Sigmoid colon (tissue), 7 donors: ENCODE measurements at regions of chr21 and their contacts with region 1.

Region 1: DNA sequence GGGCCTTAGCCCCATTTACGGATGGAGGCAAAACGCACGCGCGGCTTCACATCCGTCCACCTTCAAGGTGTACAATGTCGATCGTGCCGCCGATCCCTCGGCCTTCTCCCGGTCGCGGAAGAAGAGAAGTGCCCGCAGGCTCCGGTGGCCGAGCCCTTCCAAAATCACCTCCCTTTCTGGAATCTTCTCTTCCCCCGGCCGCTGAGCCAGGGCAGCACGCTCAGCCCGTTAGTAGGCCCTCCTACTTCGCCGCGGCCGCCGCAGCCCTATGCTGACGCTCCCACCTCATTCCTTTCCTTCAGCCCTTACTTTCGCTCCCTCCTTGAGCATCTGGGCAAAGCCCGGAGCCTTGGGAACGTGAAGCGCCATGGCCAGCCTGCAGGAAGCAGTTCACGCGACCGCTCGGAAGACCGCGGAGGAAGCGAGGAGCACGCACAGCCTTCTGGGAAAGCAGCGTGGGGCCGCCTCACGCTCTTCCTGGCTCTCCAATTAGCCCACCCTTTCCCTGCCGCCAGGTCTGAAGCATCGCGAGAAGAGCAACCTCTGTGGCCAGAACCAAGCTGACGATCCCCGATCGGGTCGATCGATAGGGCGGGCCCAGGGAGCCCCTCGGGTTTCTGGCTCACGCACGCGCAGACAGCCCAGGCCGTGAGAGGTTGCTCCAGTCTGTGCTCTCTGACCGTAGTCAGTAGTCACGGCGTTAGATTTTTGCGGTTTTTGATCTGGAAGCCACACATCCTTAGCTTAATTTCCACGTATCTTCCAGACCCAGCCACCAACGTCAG is at the start of gene CCT8:
- DNase-seq: peak; percentile 99
- H3K4me3 ChIP-seq: peak within 1 kb of the TSS; percentile 90 to 99 (median 92)
- H3K27ac ChIP-seq: peak within 1 kb of the TSS; percentile 92 to 95 (median 93)
- H3K4me1 ChIP-seq: peaks cover 0 to 34% (median 27%) of the 10 kb centered on the region in 4 donors
- H3K27me3 ChIP-seq: no peaks in the 10 kb centered on the region
- CTCF ChIP-seq: no peak
- EP300 ChIP-seq: peak in 1 of 4 donors; percentile 66
- POLR2A ChIP-seq: peak; percentile 77 to 80
- total RNA-seq, gene CCT8: 67.3 to 99.1 (median 85.9) TPM

Region 2: GRCh38 chr21:28992526-28993292 is 80.7 kb before region 1 on chr21 and contains the start of gene LTN1:
- intact Hi-C with region 1: loop called (anchors 5 kb)
- DNase-seq: peak; percentile 100
- H3K4me3 ChIP-seq: peak within 1 kb of the TSS; percentile 82 to 95 (median 90)
- H3K27ac ChIP-seq: peak within 1 kb of the TSS; percentile 88 to 92 (median 91)
- H3K4me1 ChIP-seq: peaks cover 0 to 24% (median 17%) of the 10 kb centered on the region in 4 donors
- H3K27me3 ChIP-seq: no peaks in the 10 kb centered on the region
- CTCF ChIP-seq: no peak
- EP300 ChIP-seq: no peak
- POLR2A ChIP-seq: peak; percentile 33 to 34
- total RNA-seq, gene LTN1: 19.4 to 31.0 (median 24.5) TPM